ENCODE measurements at regions of chr19 and their contacts with region 1.

Region 1: DNA sequence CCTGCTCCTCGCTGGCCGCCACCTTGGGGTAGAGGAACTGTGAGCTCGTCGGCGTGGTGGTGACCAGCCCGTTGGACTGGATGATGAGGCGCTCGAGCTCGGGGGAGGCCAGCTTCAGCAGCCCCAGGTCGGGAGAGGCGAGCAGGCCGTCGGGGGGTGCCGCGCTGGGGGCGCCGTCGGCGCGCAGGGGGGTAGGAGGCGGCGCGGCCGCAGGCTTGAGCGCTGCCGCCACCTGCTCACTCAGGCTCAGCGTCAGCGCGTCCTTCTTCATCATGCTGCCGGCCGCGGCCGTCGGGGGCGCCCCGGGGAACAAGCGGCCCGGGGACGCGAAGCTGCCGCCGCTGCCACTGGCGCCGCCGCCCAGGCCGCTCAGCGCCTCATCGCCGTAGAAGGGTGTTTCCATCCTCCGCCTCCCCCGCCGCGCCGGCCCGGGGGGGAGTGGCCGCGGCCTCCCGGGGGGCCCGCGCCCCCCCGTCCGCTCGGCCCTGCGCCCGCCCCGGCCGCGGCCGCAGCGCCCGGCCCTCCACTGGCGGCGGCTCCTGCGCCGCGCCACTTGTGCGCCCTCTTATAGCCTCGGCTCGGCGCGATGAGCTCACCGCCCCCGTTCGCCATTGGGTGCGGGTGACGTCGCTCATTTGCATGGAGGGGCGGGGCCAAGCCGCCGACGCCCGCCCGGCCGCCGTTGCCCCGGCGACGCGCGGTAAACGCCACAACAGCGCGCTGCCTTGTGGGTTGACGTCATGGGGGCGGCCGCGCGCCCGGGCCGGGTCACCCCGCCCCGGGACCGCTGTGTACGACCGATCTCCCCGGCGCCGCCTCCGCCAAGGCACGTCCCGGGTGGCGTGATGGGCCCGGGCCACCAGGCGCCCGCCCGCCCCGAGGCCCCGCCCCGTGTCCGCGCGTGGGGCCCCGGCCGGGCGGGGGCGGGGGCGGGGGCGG is at the start of gene JUND:
- DNase-seq: peak; percentile 98
- H3K4me3 Mint-ChIP-seq: peak within 1 kb of the TSS; percentile 87
- H3K27ac Mint-ChIP-seq: peak within 1 kb of the TSS; percentile 96
- H3K4me1 Mint-ChIP-seq: peaks cover 49% of the 10 kb centered on the region
- H3K27me3 Mint-ChIP-seq: no peaks in the 10 kb centered on the region
- total RNA-seq, gene JUND: 232 to 236 TPM

Region 2: GRCh38 chr19:17741456-17741855 is 539.9 kb before region 1 on chr19:
- CTCF ChIA-PET with region 1: no interaction called
- POLR2A ChIA-PET with region 1: no interaction called
- intact Hi-C with region 1: no loop called
- DNase-seq: no peak
- H3K4me3 Mint-ChIP-seq: no peak overlapping the region
- H3K27ac Mint-ChIP-seq: no peak overlapping the region
- H3K4me1 Mint-ChIP-seq: peaks cover 13% of the 10 kb centered on the region
- H3K27me3 Mint-ChIP-seq: no peaks in the 10 kb centered on the region

Region 3: GRCh38 chr19:18152444-18152816 is 128.9 kb before region 1 on chr19:
- CTCF ChIA-PET with region 1: interaction called, 6 read pairs
- POLR2A ChIA-PET with region 1: interaction called, 12 read pairs
- intact Hi-C with region 1: no loop called
- DNase-seq: peak; percentile 99
- H3K4me3 Mint-ChIP-seq: peak overlapping the region; percentile 66
- H3K27ac Mint-ChIP-seq: peak overlapping the region; percentile 97
- H3K4me1 Mint-ChIP-seq: peaks cover 22% of the 10 kb centered on the region
- H3K27me3 Mint-ChIP-seq: no peaks in the 10 kb centered on the region

Region 4: DNA sequence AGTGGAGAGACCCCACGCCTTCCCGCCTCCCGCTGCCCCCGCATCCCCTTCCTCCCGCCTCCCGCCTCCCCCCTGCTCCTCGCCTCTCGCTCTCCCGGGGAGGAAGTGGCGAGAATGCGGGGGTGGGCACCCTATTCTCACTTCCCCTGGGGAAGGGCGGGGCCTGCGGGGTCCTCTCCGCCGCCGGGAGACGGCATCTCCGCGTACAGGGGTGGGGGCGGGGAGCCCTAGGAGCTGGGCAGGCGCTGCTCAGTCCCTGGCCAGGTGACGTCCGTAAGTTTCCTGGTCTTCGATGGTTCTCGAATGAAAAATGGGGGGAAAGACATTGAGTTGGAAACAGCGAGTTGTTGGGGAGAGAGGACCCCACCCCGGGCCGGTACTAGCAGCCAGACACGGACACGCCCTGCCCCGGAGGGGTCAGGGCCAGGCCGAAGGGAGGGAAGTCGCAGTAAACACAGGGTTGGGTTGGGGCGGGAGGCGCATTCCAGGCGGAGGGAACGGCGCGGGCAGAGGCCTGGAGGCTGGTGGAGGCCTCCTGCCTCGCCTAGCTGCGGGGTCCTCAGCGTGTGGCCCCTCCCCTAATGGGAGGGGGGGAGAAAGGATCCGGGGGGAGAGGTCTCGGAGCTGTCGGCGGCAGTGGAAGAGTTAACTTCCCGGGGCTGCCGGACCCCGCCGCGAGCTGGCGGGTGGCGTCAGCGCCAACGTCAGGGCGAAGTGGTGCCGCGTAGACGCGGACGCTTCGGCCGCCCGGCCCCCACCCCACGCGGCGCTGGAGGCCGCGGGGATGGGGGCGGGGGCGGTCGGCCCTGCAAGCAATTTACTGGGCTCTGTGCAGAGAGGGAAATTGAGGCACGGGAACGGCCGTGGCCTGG is 10.5 kb after region 1 on chr19:
- CTCF ChIA-PET with region 1: interaction called, 151 read pairs
- POLR2A ChIA-PET with region 1: interaction called, 416 read pairs
- intact Hi-C with region 1: loop called (anchors 1 kb)
- DNase-seq: peak; percentile 96
- H3K4me3 Mint-ChIP-seq: peak overlapping the region; percentile 90
- H3K27ac Mint-ChIP-seq: peak overlapping the region; percentile 98
- H3K4me1 Mint-ChIP-seq: peaks cover 68% of the 10 kb centered on the region
- H3K27me3 Mint-ChIP-seq: no peaks in the 10 kb centered on the region

Region 5: GRCh38 chr19:18310118-18310909 is 29.0 kb after region 1 on chr19:
- CTCF ChIA-PET with region 1: interaction called, 343 read pairs
- POLR2A ChIA-PET with region 1: interaction called, 301 read pairs
- intact Hi-C with region 1: no loop called
- DNase-seq: no peak
- H3K4me3 Mint-ChIP-seq: no peak overlapping the region
- H3K27ac Mint-ChIP-seq: peak overlapping the region; percentile 38
- H3K4me1 Mint-ChIP-seq: peaks cover 30% of the 10 kb centered on the region
- H3K27me3 Mint-ChIP-seq: no peaks in the 10 kb centered on the region

Region 6: GRCh38 chr19:18340190-18340989 is 59.0 kb after region 1 on chr19 and contains the start of gene PGPEP1:
- CTCF ChIA-PET with region 1: interaction called, 41 read pairs
- POLR2A ChIA-PET with region 1: interaction called, 26 read pairs
- intact Hi-C with region 1: no loop called
- DNase-seq: peak; percentile 76
- H3K4me3 Mint-ChIP-seq: peak within 1 kb of the TSS; percentile 79
- H3K27ac Mint-ChIP-seq: peak within 1 kb of the TSS; percentile 87
- H3K4me1 Mint-ChIP-seq: peaks cover 19% of the 10 kb centered on the region
- H3K27me3 Mint-ChIP-seq: no peaks in the 10 kb centered on the region
- total RNA-seq, gene PGPEP1: 29.0 to 30.8 TPM

Region 7: GRCh38 chr19:18419195-18419698 is 137.9 kb after region 1 on chr19 and contains the start of gene SSBP4:
- CTCF ChIA-PET with region 1: interaction called, 43 read pairs
- POLR2A ChIA-PET with region 1: interaction called, 46 read pairs
- intact Hi-C with region 1: no loop called
- DNase-seq: peak; percentile 79
- H3K4me3 Mint-ChIP-seq: peak within 1 kb of the TSS; percentile 96
- H3K27ac Mint-ChIP-seq: peak within 1 kb of the TSS; percentile 87
- H3K4me1 Mint-ChIP-seq: peaks cover 79% of the 10 kb centered on the region
- H3K27me3 Mint-ChIP-seq: peaks cover 17% of the 10 kb centered on the region
- total RNA-seq, gene SSBP4: 97.9 to 102 TPM

Region 8: GRCh38 chr19:18521885-18522624 is 240.7 kb after region 1 on chr19 and contains the start of gene ELL:
- CTCF ChIA-PET with region 1: no interaction called
- POLR2A ChIA-PET with region 1: no interaction called
- intact Hi-C with region 1: no loop called
- DNase-seq: peak; percentile 100
- H3K4me3 Mint-ChIP-seq: peak within 1 kb of the TSS; percentile 90
- H3K27ac Mint-ChIP-seq: peak within 1 kb of the TSS; percentile 92
- H3K4me1 Mint-ChIP-seq: peaks cover 16% of the 10 kb centered on the region
- H3K27me3 Mint-ChIP-seq: no peaks in the 10 kb centered on the region
- total RNA-seq, gene ELL: 24.7 to 29.7 TPM

Measured in activated CD4-positive, alpha-beta memory T cell treated with anti-CD3 and anti-CD28 coated beads for 36 hours (primary cell).